Aorta (tissue), 5 donors: ENCODE measurements at regions of chr20 and their contacts with region 1.

Region 1: GRCh38 chr20:38406476-38406875 is 28.7 kb downstream of the SNHG17 start:
- DNase-seq: no peak
- ATAC-seq: no peak
- H3K4me3 ChIP-seq: no peak overlapping the region
- H3K27ac ChIP-seq: no peak overlapping the region
- H3K4me1 ChIP-seq: no peaks in the 10 kb centered on the region
- H3K27me3 ChIP-seq: no peaks in the 10 kb centered on the region

Region 2: DNA sequence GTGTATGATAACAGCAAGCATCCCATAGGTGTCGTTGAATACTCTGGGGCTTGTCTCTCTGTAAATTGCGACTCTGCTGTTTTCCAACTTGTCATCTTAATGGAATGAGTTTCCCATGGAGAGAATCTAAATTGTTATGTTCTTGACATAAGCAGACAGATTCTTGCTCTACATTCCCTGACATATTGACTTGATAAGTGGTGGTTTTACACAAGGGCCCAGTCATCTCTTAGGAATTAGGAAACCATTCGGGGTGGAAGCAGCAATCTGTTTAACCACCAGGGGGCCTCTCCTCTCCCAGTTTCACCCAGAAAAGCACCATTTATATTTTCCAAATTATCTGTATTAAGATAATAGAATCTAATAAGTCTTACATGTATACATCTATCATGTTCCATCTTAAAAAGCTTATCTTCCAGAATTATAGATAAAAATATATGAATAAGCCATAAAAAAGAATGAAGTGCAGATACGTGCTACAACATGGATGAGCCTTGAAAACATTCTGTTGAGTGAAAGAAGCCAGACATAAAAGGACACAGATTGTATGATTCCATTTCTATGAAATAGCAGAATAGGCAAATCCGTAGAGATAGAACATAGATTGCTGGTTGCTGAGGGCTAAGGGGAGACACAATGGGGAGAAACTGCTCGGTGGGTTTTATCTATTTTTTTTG is 1204.1 kb before region 1 on chr20:
- intact Hi-C with region 1: loop called in 1 of 2 experiments (anchors 5 kb)
- DNase-seq: no peak
- ATAC-seq: peak; percentile 75
- H3K4me3 ChIP-seq: peak overlapping the region in 1 of 2 donors; percentile 12
- H3K27ac ChIP-seq: peak overlapping the region; percentile 20 to 45
- H3K4me1 ChIP-seq: no peaks in the 10 kb centered on the region
- H3K27me3 ChIP-seq: no peaks in the 10 kb centered on the region

Region 3: DNA sequence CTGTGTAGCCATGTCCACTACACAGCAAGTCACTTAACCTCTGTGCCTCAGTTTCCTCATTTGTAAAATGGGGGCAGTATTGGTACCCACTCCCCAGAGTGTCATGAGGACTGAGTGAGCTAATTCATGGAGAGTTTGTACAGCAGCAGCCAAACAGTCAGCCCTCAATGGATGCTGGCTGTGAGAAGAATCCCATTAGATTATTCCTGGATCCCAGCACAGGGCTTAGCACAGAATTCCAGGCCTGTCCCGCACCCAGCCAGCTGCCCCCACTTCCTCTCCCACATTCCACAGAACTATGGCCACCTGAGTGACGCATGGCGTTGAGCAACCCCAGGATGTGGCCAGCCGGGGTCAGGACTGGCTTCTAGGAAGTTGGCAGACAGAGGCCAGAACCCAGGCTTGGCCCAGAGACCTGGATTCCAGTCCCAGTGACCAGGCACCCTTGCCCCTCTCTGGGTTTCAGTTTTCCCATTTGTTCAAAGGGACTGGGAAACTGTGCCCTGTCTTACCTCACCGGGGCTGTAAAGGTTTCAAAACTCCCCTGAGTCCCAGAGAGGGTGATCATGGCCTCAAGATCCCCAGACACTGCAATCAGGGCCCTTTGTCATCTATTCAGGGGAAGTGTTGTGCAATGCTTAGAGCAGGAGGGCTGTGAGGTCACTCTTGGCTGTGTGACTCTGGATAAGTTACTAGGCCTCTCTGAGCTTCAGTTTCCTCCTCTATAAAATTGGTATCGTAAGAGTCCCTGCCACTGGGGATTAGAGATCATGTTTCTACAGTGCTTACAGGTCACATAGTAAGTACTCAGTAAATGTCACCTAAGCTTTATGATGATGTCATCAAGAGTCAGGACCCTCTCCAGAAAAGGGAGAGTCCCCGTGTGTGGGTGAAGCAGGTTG is 238.4 kb before region 1 on chr20:
- intact Hi-C with region 1: no loop called
- DNase-seq: peak; percentile 93 to 95
- ATAC-seq: peak; percentile 69
- H3K4me3 ChIP-seq: no peak overlapping the region
- H3K27ac ChIP-seq: peak overlapping the region in 1 of 2 donors; percentile 66
- H3K4me1 ChIP-seq: peaks cover 0 to 1% of the 10 kb centered on the region in 2 donors
- H3K27me3 ChIP-seq: no peaks in the 10 kb centered on the region

Region 4: DNA sequence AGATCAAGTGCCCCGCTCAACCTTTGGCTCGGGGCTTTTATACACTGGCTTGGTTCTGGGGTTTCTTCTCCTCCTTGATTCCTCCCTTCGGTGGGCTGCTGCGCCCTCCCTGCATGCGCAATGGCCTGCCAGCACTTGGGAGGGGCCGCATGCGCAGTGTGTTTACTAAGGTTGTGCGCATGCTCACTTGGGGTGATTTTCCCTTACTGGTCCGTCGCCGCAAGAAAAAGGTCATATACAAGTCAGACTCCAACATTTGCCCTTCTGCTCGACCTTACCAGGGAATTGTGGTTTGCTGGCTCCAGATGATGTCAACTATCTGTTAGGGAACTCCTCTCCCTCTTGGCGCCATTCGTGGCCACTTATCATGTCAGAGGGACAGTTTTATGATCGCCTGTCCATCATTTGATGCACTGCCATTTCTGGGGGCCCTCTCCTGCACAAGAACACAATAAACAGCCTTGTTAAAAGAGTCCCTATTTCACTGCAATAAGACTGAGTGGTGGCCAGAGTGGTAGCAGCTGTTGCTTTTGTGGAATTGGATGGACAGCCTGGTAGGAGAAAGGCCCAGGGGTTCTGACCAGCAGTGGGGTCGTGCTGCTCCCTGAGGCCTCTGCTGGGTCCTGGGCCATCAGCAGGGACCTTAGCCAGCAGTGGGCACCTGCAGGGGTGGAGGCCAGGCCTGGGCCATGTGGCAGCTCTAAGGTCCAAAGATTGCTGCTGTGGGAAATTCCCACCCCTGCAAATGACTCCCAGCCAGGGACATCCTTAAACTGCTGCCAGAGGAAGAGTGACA is 63.0 kb before region 1 on chr20:
- intact Hi-C with region 1: loop called in 1 of 2 experiments (anchors 10 kb)
- DNase-seq: peak; percentile 72 to 81
- ATAC-seq: peak; percentile 60
- H3K4me3 ChIP-seq: no peak overlapping the region
- H3K27ac ChIP-seq: no peak overlapping the region
- H3K4me1 ChIP-seq: no peaks in the 10 kb centered on the region
- H3K27me3 ChIP-seq: no peaks in the 10 kb centered on the region

Region 5: DNA sequence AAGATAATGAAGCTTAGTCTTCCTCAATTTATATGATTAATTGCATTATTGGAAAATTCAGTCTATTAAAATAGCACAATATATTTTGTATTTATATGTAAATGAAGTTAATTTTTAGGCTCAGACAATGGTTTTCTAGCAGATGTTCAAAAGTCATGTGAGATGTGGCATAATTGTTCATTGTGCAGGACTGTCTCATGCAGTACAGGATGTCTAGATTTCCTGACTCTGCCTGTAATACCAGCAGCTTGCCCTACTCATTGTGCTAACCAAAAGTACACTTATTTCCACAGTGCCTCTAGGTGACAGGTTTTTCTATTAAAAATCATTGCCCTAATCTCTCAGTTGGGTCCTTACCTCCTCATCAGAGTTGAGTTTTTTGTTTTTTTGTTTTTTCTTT is 78.6 kb after region 1 on chr20:
- intact Hi-C with region 1: no loop called
- DNase-seq: no peak
- ATAC-seq: no peak
- H3K4me3 ChIP-seq: no peak overlapping the region
- H3K27ac ChIP-seq: no peak overlapping the region
- H3K4me1 ChIP-seq: no peaks in the 10 kb centered on the region
- H3K27me3 ChIP-seq: no peaks in the 10 kb centered on the region

Region 6: DNA sequence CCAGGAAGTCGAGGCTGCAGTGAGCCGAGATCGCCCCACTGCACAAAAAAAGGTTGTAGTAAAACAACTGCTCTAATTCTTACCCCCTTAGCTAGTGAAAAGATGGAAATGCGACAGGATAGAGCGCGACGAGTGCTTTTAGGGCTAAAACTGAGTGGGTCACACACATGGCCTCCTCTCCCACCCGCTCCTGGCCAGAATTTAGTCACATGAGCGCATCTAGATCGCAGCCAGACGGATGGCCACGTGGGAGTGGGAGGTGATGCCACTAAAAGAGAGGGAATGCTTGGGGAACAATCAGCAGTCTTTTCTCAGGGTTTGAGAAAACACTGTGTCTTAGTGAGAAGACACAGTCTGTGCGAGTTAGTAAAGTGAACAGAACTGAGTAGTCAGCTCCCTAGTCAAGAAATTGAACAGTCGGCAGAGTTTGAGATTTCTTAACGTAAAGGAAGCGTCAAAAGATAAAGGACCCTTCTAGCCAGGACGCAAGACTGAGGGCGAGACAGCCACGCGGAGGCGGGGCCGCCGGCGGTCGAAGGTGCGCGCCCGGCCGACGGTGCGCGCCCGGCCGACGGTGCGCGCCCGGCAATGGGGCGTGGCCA is 341.1 kb after region 1 on chr20:
- intact Hi-C with region 1: no loop called
- DNase-seq: no peak
- ATAC-seq: no peak
- H3K4me3 ChIP-seq: peak overlapping the region; percentile 12 to 33
- H3K27ac ChIP-seq: no peak overlapping the region
- H3K4me1 ChIP-seq: peaks cover 0 to 5% of the 10 kb centered on the region in 2 donors
- H3K27me3 ChIP-seq: no peaks in the 10 kb centered on the region